Colonic mucosa (tissue), 4 donors: ENCODE measurements at regions of chr17 and their contacts with region 1.

Region 1: GRCh38 chr17:48024937-48025906 is 12.4 kb downstream of the COPZ2 start:
- DNase-seq: peak; percentile 99
- H3K4me3 ChIP-seq: peak overlapping the region; percentile 41
- H3K27ac ChIP-seq: peak overlapping the region; percentile 51
- H3K4me1 ChIP-seq: peaks cover 12% of the 10 kb centered on the region
- H3K27me3 ChIP-seq: no peaks in the 10 kb centered on the region
- CTCF ChIP-seq: peak; percentile 49

Region 2: GRCh38 chr17:48074315-48075081 is 49.3 kb after region 1 on chr17:
- intact Hi-C with region 1: loop called (anchors 1 kb)
- DNase-seq: peak; percentile 88
- H3K4me3 ChIP-seq: no peak overlapping the region
- H3K27ac ChIP-seq: no peak overlapping the region
- H3K4me1 ChIP-seq: no peaks in the 10 kb centered on the region
- H3K27me3 ChIP-seq: no peaks in the 10 kb centered on the region
- CTCF ChIP-seq: peak; percentile 66

Region 3: GRCh38 chr17:48131216-48131824 is 106.1 kb after region 1 on chr17:
- intact Hi-C with region 1: loop called (anchors 5 kb)
- DNase-seq: peak; percentile 77
- H3K4me3 ChIP-seq: no peak overlapping the region
- H3K27ac ChIP-seq: no peak overlapping the region
- H3K4me1 ChIP-seq: no peaks in the 10 kb centered on the region
- H3K27me3 ChIP-seq: no peaks in the 10 kb centered on the region
- CTCF ChIP-seq: peak; percentile 87